Caki2 (cell line): ENCODE measurements at regions of chr6 and their contacts with region 1.

Region 1: DNA sequence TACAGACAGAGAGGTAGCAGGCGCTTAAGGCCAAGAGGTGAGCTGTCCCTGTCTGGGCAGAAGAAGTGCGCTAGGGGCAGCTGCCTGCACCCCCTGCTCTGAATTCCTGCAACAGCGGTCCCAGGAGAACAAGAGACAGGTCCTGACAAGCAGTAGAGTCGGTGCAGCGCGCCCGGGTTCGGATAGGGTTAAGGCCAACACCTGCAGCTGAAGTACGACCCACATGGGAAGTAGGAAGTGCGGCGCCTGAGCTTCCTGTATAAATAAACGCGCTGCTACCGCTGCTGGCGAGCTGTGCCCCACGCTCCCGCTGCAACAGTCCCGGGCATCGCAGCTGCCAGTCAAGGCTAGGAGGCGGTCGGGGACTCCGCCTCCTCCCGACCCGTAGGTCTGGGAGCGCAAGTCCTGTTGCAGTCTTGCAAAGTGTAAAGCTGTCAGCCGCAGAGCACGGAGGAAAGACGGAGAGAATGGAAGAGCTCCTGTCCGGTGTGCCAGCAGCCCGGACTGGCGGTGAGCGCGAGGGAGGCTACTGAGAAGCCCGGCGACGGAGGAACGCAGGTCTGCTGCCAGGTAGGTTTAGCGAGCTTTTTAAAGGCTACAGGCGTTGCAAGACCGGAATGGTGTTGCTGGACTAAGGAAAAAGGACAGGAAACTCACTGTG is at the start of gene RNF144B:
- DNase-seq: peak; percentile 93
- total RNA-seq, gene RNF144B: 30.7 and 37.7 TPM in 2 replicates

Region 2: DNA sequence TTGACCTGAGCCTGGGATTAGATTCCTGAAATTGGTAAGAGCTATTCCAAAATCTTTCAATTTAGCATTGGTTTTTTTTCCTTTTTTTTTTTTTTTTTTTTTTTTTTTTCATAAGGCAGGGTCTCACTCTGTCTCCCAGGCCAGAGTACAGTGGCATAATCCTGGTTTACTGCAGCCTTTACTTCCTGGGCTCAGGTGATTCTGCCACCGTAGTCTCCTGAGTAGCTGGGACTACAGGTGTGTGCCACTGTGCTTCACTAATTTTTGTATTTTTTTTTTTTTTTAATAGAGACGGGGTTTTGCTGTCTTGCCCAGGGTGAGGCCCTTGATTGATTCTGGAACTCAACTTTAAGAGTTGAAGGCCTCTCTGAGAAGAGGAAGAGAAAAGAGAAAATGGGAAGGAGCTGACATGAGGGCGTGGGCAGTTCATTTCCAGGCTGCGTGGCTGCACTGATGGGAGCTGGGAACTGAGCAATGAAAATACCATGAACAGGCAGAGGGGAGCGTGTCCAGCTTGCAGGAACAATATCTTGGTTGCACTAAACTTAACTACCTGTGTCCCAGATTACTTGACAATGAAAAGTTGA is 207.3 kb before region 1 on chr6:
- in situ Hi-C with region 1: no loop called
- DNase-seq: no peak

Region 3: DNA sequence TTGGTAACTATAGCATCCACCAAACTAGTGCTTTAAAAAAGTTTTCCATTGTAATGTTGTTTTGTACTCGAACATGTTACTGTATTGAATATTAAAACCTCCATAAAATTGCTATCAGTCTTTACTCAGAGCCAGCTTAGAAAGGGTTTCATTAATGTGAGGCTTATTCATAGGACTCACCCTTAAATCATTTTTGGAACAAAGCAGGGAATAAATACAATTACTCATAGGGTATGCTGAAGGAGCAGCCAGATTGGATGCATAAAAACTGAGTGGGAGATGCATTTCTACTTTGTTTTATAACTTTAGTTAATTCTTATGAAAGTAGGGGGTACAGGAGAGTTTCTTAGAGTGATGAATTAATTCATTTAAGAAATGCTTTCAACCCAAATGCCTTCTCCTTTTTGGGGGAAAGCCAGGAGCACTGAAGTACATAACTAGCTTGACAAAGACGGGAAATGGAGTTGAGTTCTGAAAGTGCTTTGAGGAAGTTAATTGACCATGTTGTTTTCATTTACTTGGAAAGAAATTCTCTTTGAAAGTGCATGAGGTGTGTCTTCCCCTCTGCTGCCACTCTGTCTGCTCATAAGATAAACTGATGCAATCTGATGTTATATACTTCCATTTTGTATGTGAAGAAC is 90.2 kb after region 1 on chr6:
- in situ Hi-C with region 1: loop called (anchors 25 kb)
- DNase-seq: peak; percentile 64